ENCODE measurements at regions of chr6 and their contacts with region 1.

Region 1: GRCh38 chr6:134640975-134641429 is 308.9 kb downstream of the ALDH8A1 start:
- DNase-seq: peak; percentile 45 to 88 (median 74)
- ATAC-seq: peak; percentile 79 to 96
- H3K4me3 Mint-ChIP-seq: no peak overlapping the region
- H3K27ac Mint-ChIP-seq: no peak overlapping the region
- H3K4me1 Mint-ChIP-seq: peaks cover 5 to 20% (median 15%) of the 10 kb centered on the region in 4 donors
- H3K27me3 Mint-ChIP-seq: no peaks in the 10 kb centered on the region

Region 2: DNA sequence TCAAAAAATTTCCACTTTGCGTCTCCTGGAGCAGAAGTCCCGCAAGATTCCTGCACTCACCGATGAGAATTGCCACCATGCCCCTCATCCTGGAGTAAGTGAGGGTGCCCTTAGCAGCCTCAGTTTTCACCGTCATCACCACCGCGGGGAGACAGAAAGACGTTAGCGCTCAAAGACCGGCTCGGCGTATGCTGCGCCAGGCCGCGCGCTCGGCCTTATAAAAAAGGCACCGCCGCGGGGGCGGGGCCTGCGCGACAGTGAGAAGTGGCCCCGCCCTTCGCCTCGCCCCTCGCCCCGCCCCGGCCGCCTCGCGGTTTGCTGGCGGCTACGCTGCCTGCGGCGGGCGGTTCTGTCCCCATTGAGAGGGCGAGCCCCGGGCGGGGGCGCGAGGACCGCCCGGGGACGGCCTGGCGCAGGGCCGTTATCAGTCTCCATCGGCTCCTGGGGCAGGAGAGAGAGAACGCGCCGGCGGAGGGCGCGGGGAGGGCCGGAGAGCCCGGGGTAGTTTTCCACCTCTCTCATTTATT is 466.3 kb before region 1 on chr6:
- POLR2A ChIA-PET with region 1: interaction called, 24 read pairs
- DNase-seq: peak; percentile 85 to 95 (median 93)
- ATAC-seq: peak; percentile 72 to 77
- H3K4me3 Mint-ChIP-seq: peak overlapping the region; percentile 80 to 99 (median 96)
- H3K27ac Mint-ChIP-seq: peak overlapping the region; percentile 88 to 99 (median 96)
- H3K4me1 Mint-ChIP-seq: peaks cover 27 to 76% (median 73%) of the 10 kb centered on the region in 4 donors
- H3K27me3 Mint-ChIP-seq: no peaks in the 10 kb centered on the region

Region 3: DNA sequence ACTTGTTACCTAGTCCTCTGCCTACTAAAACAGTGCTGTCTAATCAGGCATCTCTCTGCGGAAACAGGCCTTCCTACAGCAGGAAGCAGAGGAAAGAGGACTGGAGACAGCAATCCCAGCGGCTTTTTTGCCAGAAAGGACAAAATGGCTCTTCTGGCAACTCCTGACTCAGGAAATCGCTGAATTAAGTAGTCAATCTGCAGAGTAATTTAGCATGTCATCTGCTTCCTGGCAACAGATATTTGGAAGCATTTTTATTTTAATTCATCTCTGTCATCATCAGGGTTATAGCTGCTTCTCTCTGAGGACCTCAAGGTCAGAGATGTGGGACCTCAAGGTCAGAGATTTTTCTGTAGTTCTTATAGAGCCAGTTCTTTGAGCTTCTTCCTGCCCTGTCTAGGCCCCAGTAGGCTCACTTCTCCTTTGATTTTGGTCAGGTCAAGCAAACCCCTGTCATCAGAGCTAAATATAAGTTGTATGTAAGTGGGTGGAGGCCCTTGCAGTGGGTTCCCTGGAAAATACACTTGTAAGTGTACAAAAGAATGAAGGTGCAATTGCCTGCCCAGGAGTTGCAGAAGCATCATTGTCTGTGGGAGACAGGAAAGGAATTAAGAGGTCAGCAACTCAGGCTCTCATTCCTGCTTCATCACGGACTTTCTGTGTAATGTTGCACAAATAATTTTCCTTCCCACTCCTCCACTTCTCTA is 79.5 kb after region 1 on chr6:
- POLR2A ChIA-PET with region 1: no interaction called
- DNase-seq: no peak
- ATAC-seq: no peak
- H3K4me3 Mint-ChIP-seq: no peak overlapping the region
- H3K27ac Mint-ChIP-seq: peak overlapping the region in 1 of 10 donors; percentile 9
- H3K4me1 Mint-ChIP-seq: peaks cover 2 to 5% (median 2%) of the 10 kb centered on the region in 4 donors
- H3K27me3 Mint-ChIP-seq: no peaks in the 10 kb centered on the region